Activated CD8-positive, alpha-beta T cell treated with anti-CD3 and anti-CD28 coated beads for 36 hours (primary cell): ENCODE measurements at regions of chr17 and their contacts with region 1.

Region 1: DNA sequence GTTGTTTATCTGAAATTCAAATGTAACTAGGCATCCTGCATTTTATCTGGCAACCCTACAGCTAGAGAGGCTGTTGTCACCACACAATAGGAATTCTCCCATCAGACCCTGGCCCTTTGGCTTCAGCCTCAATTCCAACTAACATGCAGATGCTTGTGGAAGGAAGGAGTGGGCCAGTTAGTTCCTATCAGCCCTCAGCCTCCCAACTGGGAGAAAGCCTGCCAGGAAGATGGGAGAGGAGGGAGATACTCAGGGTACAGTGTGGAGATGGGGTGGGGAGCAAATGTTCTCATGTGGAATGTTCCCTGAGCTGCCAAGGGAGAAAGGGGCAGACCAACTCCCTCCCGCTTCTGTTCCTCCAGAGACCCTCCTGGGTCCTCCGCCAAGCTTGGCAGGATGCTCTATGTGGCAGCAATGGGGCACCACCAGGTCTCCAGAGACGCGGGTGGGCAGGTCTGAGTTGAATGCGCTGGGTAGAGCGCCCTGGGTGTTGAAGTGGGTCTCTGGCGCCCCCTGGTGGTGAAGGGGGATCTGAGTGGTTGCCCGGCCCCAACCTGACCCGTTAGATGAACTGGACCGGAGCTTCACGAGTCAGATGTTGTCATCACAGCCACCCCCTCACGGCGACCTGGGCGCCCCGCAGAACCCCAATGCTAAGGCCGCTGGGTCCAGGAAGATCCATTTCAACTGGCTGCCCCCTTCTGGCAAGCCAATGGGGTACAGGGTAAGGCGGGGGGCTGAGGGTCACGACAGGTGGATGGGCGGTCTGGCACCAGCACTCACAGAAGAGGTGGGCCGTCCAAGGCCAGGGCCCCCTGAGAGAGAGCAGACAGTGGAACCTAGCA is 15.2 kb downstream of the GALK1 start:
- DNase-seq: peak; percentile 95
- ATAC-seq: peak; percentile 77
- H3K4me3 Mint-ChIP-seq: no peak overlapping the region
- H3K27ac Mint-ChIP-seq: no peak overlapping the region
- H3K4me1 Mint-ChIP-seq: peaks cover 17% of the 10 kb centered on the region
- H3K27me3 Mint-ChIP-seq: peaks cover 1% of the 10 kb centered on the region
- CTCF ChIP-seq: peak; percentile 96

Region 2: DNA sequence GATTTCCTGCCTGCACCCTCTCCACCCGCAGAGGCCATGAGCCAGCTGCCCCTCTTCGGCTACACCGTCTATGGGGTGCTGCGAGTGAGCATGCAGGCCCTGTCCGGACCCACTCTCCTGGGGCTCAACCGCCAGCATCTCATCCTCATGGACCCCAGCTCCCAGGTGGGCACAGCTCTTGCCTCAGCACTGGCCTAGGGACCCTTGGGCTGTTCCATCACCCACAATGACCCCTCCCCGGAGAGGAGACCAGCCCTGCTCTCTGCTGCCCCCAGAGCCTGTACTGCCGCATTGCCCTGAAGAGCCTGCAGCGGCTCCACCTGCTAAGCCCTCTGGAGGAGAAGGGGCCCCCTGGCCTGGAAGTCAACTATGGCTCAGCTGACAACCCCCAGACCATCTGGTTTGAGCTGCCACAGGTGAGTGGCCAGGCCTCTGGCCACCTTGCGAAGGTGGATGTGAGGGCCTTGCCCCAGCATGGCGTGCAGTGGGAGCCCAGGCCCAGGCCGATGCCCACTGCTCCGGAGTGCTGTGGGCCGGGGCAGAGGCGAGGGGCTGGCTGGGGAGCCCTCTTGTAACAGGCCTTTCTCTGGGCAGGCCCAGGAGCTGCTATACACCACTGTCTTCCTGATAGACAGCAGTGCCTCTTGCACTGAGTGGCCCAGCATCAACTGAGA is 123.8 kb before region 1 on chr17:
- CTCF ChIA-PET with region 1: interaction called, 280 read pairs
- POLR2A ChIA-PET with region 1: interaction called, 3 read pairs
- intact Hi-C with region 1: loop called (anchors 5 kb)
- DNase-seq: peak; percentile 36
- ATAC-seq: peak; percentile 82
- H3K4me3 Mint-ChIP-seq: no peak overlapping the region
- H3K27ac Mint-ChIP-seq: no peak overlapping the region
- H3K4me1 Mint-ChIP-seq: no peaks in the 10 kb centered on the region
- H3K27me3 Mint-ChIP-seq: no peaks in the 10 kb centered on the region
- CTCF ChIP-seq: peak; percentile 67

Region 3: GRCh38 chr17:75661531-75661930 is 88.2 kb before region 1 on chr17:
- CTCF ChIA-PET with region 1: interaction called, 79 read pairs
- POLR2A ChIA-PET with region 1: interaction called, 6 read pairs
- intact Hi-C with region 1: no loop called
- DNase-seq: no peak
- ATAC-seq: no peak
- H3K4me3 Mint-ChIP-seq: no peak overlapping the region
- H3K27ac Mint-ChIP-seq: no peak overlapping the region
- H3K4me1 Mint-ChIP-seq: peaks cover 15% of the 10 kb centered on the region
- H3K27me3 Mint-ChIP-seq: no peaks in the 10 kb centered on the region
- CTCF ChIP-seq: no peak

Region 4: GRCh38 chr17:75693500-75694481 is 56.0 kb before region 1 on chr17:
- CTCF ChIA-PET with region 1: interaction called, 347 read pairs
- POLR2A ChIA-PET with region 1: interaction called, 4 read pairs
- intact Hi-C with region 1: no loop called
- DNase-seq: no peak
- ATAC-seq: no peak
- H3K4me3 Mint-ChIP-seq: no peak overlapping the region
- H3K27ac Mint-ChIP-seq: no peak overlapping the region
- H3K4me1 Mint-ChIP-seq: peaks cover 34% of the 10 kb centered on the region
- H3K27me3 Mint-ChIP-seq: no peaks in the 10 kb centered on the region
- CTCF ChIP-seq: no peak

Region 5: DNA sequence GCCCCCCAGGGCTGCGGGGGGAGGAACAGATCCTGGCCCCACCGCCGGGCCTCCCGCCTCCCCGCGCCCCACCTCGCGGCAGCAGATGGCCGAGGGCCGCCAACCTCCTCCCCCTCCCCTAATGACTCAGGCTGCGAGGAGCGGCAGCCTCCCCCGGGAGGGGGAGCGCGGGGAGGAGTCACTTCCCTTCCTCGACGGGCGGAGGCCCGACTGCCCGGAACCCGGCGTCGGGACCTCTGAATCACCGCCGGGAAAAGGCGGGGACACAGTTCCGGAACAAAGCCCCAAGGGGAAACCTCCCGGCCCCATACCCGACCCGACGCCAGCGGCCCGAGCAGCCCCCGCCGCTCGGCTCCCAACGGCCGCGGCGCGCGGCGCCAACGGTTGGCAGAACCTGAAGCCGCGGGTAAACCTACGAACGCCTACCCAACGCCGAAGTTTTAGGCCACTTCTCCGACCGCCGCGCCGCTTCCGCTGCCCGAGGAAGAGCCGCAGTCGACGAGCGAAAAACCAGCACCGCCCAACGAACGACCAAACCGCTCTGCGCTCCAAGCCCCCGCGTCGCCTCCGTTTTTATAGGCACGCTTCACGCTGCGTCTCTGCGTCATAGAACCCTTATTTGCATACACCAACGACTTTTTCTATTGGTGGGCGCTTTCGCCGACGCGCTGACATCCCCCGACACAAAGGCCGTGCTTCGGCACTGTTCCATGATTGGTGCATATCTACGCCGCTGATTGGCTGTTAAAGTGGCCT is 29.6 kb after region 1 on chr17:
- CTCF ChIA-PET with region 1: interaction called, 18 read pairs
- POLR2A ChIA-PET with region 1: interaction called, 21 read pairs
- intact Hi-C with region 1: no loop called
- DNase-seq: peak; percentile 96
- ATAC-seq: peak; percentile 69
- H3K4me3 Mint-ChIP-seq: peak overlapping the region; percentile 88
- H3K27ac Mint-ChIP-seq: peak overlapping the region; percentile 95
- H3K4me1 Mint-ChIP-seq: peaks cover 43% of the 10 kb centered on the region
- H3K27me3 Mint-ChIP-seq: peaks cover 2% of the 10 kb centered on the region
- CTCF ChIP-seq: no peak

Region 6: GRCh38 chr17:75855310-75856081 is 105.7 kb after region 1 on chr17 and contains the start of gene WBP2:
- CTCF ChIA-PET with region 1: interaction called, 10 read pairs
- POLR2A ChIA-PET with region 1: interaction called, 3 read pairs
- intact Hi-C with region 1: no loop called
- DNase-seq: peak; percentile 100
- ATAC-seq: peak; percentile 93
- H3K4me3 Mint-ChIP-seq: no peak within 1 kb of the TSS
- H3K27ac Mint-ChIP-seq: peak within 1 kb of the TSS; percentile 92
- H3K4me1 Mint-ChIP-seq: peaks cover 33% of the 10 kb centered on the region
- H3K27me3 Mint-ChIP-seq: no peaks in the 10 kb centered on the region
- CTCF ChIP-seq: peak; percentile 53
- total RNA-seq, gene WBP2: 54.4 to 58.5 TPM